Activated CD4-positive, alpha-beta T cell treated with anti-CD3 and anti-CD28 coated beads for 36 hours (primary cell): ENCODE measurements at regions of chrX and their contacts with region 1.

Region 1: GRCh38 chrX:41116948-41117347 is 31.7 kb downstream of the USP9X start:
- DNase-seq: no peak
- ATAC-seq: peak; percentile 81
- H3K4me3 Mint-ChIP-seq: peak overlapping the region; percentile 49
- H3K27ac Mint-ChIP-seq: peak overlapping the region; percentile 72
- H3K4me1 Mint-ChIP-seq: peaks cover 76% of the 10 kb centered on the region
- H3K27me3 Mint-ChIP-seq: no peaks in the 10 kb centered on the region

Region 2: DNA sequence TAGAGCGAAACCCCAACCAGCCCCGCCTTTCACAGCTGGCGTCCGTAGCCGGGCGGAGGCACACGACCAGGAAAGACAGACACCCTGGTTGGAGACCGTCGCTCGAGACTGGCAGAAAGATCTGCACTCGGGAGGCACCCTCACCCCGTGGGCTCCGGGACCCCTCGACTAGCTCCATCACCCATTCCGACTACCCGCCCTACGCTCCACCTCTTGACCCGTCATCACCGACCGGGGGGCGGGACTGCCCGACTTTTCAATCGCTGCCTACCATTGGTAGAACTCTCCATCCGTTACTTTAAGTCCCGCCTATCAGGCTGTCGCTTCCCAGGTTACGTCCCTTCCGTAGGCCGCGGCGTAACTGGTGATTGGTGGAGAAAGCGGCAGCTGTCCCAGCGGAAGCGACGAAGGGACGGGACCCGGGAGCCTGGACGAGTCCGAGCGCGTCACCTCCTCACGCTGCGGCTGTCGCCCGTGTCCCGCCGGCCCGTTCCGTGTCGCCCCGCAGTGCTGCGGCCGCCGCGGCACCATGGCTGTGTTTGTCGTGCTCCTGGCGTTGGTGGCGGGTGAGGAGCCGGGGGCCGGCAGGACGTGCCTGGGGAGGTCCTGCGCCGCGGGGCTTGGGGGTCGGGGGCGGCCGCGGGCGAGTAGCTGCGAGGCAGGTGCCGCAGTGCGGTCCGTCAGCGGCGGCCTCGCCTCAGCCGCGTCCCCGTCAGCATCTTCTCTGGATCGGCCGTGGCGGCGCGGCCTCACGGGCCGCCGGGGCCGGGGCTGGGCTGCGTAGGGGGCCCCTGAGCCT is 536.2 kb before region 1 on chrX and contains the start of gene ATP6AP2:
- CTCF ChIA-PET with region 1: no interaction called
- POLR2A ChIA-PET with region 1: no interaction called
- intact Hi-C with region 1: loop called in 1 of 2 experiments (anchors 10 kb)
- DNase-seq: peak; percentile 94
- ATAC-seq: peak; percentile 98
- H3K4me3 Mint-ChIP-seq: peak within 1 kb of the TSS; percentile 77
- H3K27ac Mint-ChIP-seq: peak within 1 kb of the TSS; percentile 86
- H3K4me1 Mint-ChIP-seq: peaks cover 29% of the 10 kb centered on the region
- H3K27me3 Mint-ChIP-seq: no peaks in the 10 kb centered on the region
- total RNA-seq, gene ATP6AP2: 39.9 to 52.2 TPM

Region 3: GRCh38 chrX:40735325-40736169 is 381.4 kb before region 1 on chrX and contains the start of gene MED14:
- CTCF ChIA-PET with region 1: no interaction called
- POLR2A ChIA-PET with region 1: no interaction called
- intact Hi-C with region 1: loop called (anchors 5 to 10 kb)
- DNase-seq: peak; percentile 95
- ATAC-seq: peak; percentile 93
- H3K4me3 Mint-ChIP-seq: peak within 1 kb of the TSS; percentile 84
- H3K27ac Mint-ChIP-seq: peak within 1 kb of the TSS; percentile 96
- H3K4me1 Mint-ChIP-seq: peaks cover 43% of the 10 kb centered on the region
- H3K27me3 Mint-ChIP-seq: no peaks in the 10 kb centered on the region
- total RNA-seq, gene MED14: 51.0 to 60.1 TPM

Region 4: GRCh38 chrX:40792433-40792832 is 324.5 kb before region 1 on chrX:
- CTCF ChIA-PET with region 1: no interaction called
- POLR2A ChIA-PET with region 1: no interaction called
- intact Hi-C with region 1: loop called in 1 of 2 experiments (anchors 5 kb)
- DNase-seq: no peak
- ATAC-seq: no peak
- H3K4me3 Mint-ChIP-seq: no peak overlapping the region
- H3K27ac Mint-ChIP-seq: no peak overlapping the region
- H3K4me1 Mint-ChIP-seq: peaks cover 2% of the 10 kb centered on the region
- H3K27me3 Mint-ChIP-seq: no peaks in the 10 kb centered on the region

Region 5: DNA sequence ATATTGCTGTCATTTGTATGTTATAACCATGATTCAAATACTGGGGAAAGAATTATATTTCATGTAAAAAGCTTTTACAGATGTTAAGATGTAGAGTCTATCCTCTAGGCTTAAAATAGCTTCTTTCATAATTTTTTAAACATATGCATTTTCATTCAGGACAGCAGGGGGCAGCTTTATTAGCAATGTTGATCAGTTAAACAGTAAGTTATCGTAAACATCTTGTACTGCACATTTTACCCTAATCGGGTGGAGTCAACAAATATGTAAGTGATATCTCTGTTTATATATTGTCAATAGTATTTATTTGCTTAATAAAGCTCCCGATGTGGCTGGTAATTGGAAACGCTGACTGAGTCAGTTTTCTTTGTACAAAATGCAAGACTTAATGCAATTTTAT is 239.1 kb before region 1 on chrX:
- CTCF ChIA-PET with region 1: interaction called, 12 read pairs
- POLR2A ChIA-PET with region 1: no interaction called
- intact Hi-C with region 1: loop called (anchors 1 to 5 kb)
- DNase-seq: peak; percentile 6
- ATAC-seq: no peak
- H3K4me3 Mint-ChIP-seq: no peak overlapping the region
- H3K27ac Mint-ChIP-seq: no peak overlapping the region
- H3K4me1 Mint-ChIP-seq: no peaks in the 10 kb centered on the region
- H3K27me3 Mint-ChIP-seq: peaks cover 2% of the 10 kb centered on the region

Region 6: DNA sequence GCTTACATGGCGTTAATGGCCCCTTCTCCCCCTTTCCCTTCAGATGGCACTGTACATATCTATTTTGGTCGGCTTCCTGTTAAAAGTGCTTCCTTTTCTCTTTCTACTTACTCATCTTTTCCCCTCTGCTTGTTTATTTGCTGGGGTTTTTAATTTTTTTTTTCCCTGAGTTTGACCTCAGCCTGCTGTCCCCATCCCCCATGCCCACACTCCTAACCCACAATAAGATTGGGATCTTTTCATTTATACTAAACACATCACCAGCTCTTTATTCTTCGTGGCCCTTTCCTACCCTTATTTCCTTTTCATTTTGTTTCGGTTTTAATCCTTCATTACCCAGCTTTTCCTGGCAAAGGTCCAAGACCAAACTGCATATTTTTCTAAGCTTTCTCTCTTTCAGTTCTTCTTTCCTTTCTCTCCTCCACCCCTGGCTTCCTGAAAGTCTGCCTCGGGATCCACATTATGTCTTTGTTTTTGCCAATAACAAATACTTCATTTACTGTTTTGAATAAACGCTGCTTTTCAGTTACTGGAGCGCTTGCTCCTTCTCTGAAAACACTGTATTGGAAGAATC is 183.7 kb before region 1 on chrX:
- CTCF ChIA-PET with region 1: interaction called, 4 read pairs
- POLR2A ChIA-PET with region 1: no interaction called
- intact Hi-C with region 1: loop called (anchors 1 to 2 kb)
- DNase-seq: peak; percentile 40
- ATAC-seq: peak; percentile 74
- H3K4me3 Mint-ChIP-seq: peak overlapping the region; percentile 67
- H3K27ac Mint-ChIP-seq: peak overlapping the region; percentile 95
- H3K4me1 Mint-ChIP-seq: peaks cover 20% of the 10 kb centered on the region
- H3K27me3 Mint-ChIP-seq: no peaks in the 10 kb centered on the region

Region 7: GRCh38 chrX:40964633-40965586 is 152.0 kb before region 1 on chrX:
- CTCF ChIA-PET with region 1: no interaction called
- POLR2A ChIA-PET with region 1: no interaction called
- intact Hi-C with region 1: no loop called
- DNase-seq: no peak
- ATAC-seq: no peak
- H3K4me3 Mint-ChIP-seq: no peak overlapping the region
- H3K27ac Mint-ChIP-seq: no peak overlapping the region
- H3K4me1 Mint-ChIP-seq: peaks cover 5% of the 10 kb centered on the region
- H3K27me3 Mint-ChIP-seq: no peaks in the 10 kb centered on the region

Region 8: DNA sequence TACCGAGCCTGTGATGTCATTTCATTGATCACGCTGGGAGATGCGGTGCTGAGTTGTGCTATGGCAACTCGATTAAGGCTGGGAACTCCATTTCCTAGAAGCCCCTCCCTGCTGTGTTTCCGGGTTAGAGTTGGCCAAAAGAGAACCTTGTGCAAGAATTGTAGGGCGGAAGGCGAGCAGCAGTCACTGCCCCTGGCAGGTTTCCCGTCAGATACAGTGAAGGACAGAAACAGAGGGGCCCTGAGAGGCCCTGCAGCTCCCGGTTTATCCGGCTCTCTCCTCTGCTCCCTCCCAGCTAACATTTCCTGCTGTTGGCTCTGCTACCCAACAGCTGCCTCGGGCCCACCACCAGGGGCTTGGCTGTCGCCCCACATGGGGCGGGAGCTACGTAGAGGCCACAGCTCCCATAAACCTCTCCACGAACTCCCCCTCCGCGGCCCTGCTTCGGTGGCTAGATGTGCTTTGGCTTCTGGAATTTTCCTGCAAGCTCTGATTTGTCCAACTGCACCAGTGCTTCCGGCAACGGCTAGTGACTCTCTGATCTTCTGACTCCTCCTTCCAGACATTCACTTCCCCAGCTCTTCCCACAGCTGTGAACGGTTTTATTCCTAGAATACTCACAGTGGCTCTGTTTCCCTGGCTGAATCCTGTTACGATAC is 106.6 kb before region 1 on chrX:
- CTCF ChIA-PET with region 1: interaction called, 4 read pairs
- POLR2A ChIA-PET with region 1: interaction called, 3 read pairs
- intact Hi-C with region 1: loop called (anchors 5 to 10 kb)
- DNase-seq: peak; percentile 65
- ATAC-seq: peak; percentile 84
- H3K4me3 Mint-ChIP-seq: peak overlapping the region; percentile 56
- H3K27ac Mint-ChIP-seq: peak overlapping the region; percentile 83
- H3K4me1 Mint-ChIP-seq: peaks cover 22% of the 10 kb centered on the region
- H3K27me3 Mint-ChIP-seq: no peaks in the 10 kb centered on the region

Region 9: GRCh38 chrX:41421071-41421729 is 304.3 kb after region 1 on chrX:
- CTCF ChIA-PET with region 1: no interaction called
- POLR2A ChIA-PET with region 1: no interaction called
- intact Hi-C with region 1: no loop called
- DNase-seq: peak; percentile 7
- ATAC-seq: no peak
- H3K4me3 Mint-ChIP-seq: no peak overlapping the region
- H3K27ac Mint-ChIP-seq: no peak overlapping the region
- H3K4me1 Mint-ChIP-seq: no peaks in the 10 kb centered on the region
- H3K27me3 Mint-ChIP-seq: no peaks in the 10 kb centered on the region